ENCODE measurements at regions of chr9 and their contacts with region 1.

Region 1: GRCh38 chr9:127531454-127532339 is 80.4 kb upstream of the STXBP1 start:
- DNase-seq: no peak
- ATAC-seq: no peak
- H3K4me3 ChIP-seq: no peak overlapping the region
- H3K27ac ChIP-seq: peak overlapping the region in 1 of 10 donors; percentile 4
- H3K4me1 ChIP-seq: peaks cover 22 to 78% (median 50%) of the 10 kb centered on the region in 9 donors
- H3K27me3 ChIP-seq: no peaks in the 10 kb centered on the region
- CTCF ChIP-seq: no peak

Region 2: GRCh38 chr9:127568971-127569885 is 37.5 kb after region 1 on chr9:
- intact Hi-C with region 1: loop called in 5 of 10 experiments (anchors 2 to 5 kb)
- DNase-seq: peak; percentile 79 to 87
- ATAC-seq: peak; percentile 89 to 92 (median 90)
- H3K4me3 ChIP-seq: peak overlapping the region; percentile 55 to 93 (median 88)
- H3K27ac ChIP-seq: peak overlapping the region; percentile 81 to 96 (median 94)
- H3K4me1 ChIP-seq: peaks cover 4 to 67% (median 37%) of the 10 kb centered on the region in 9 donors
- H3K27me3 ChIP-seq: peaks cover 0 to 8% (median 0%) of the 10 kb centered on the region in 7 donors
- CTCF ChIP-seq: no peak